ENCODE measurements at regions of chr12 and their contacts with region 1.

Region 1: GRCh38 chr12:102061560-102062418 is at the start of gene WASHC3:
- DNase-seq: peak; percentile 97
- H3K4me3 Mint-ChIP-seq: peak within 1 kb of the TSS; percentile 85
- H3K27ac Mint-ChIP-seq: peak within 1 kb of the TSS; percentile 92
- H3K4me1 Mint-ChIP-seq: peaks cover 32% of the 10 kb centered on the region
- H3K27me3 Mint-ChIP-seq: no peaks in the 10 kb centered on the region
- total RNA-seq, gene WASHC3: 39.3 to 40.1 TPM

Region 2: GRCh38 chr12:101697197-101697929 is 364.4 kb before region 1 on chr12 and contains the start of gene CHPT1:
- CTCF ChIA-PET with region 1: no interaction called
- POLR2A ChIA-PET with region 1: no interaction called
- intact Hi-C with region 1: loop called (anchors 5 kb)
- DNase-seq: peak; percentile 74
- H3K4me3 Mint-ChIP-seq: peak within 1 kb of the TSS; percentile 88
- H3K27ac Mint-ChIP-seq: peak within 1 kb of the TSS; percentile 61
- H3K4me1 Mint-ChIP-seq: peaks cover 39% of the 10 kb centered on the region
- H3K27me3 Mint-ChIP-seq: no peaks in the 10 kb centered on the region
- total RNA-seq, gene CHPT1: 20.6 to 23.0 TPM

Region 3: DNA sequence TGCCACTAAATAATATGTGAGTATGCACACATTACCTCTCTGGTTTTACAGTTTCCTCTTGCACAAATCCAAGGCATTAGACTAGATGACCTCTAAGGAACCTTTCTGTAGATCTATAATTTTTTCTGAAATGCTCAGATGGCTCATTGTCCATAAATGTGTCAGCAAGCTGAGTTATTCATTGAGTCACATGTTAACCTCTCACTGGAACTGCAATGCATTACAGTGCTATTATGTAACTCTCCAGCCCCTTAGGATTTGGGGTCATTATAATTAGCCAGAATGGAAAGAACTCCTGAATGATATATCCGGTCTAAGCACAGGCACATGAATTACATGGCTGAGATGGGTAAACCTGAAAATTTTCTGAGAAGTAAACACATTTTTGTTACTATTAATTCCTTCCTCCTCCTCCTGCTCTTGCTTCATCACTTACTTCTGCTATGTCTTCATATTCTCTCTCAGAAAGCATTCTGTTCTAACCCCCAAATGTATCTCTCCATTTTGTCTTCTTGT is 204.7 kb before region 1 on chr12:
- CTCF ChIA-PET with region 1: no interaction called
- POLR2A ChIA-PET with region 1: no interaction called
- intact Hi-C with region 1: loop called (anchors 5 kb)
- DNase-seq: no peak
- H3K4me3 Mint-ChIP-seq: no peak overlapping the region
- H3K27ac Mint-ChIP-seq: no peak overlapping the region
- H3K4me1 Mint-ChIP-seq: peaks cover 23% of the 10 kb centered on the region
- H3K27me3 Mint-ChIP-seq: no peaks in the 10 kb centered on the region

Region 4: GRCh38 chr12:101951002-101951670 is 110.7 kb before region 1 on chr12:
- CTCF ChIA-PET with region 1: no interaction called
- POLR2A ChIA-PET with region 1: no interaction called
- intact Hi-C with region 1: loop called (anchors 1 kb)
- DNase-seq: peak; percentile 32
- H3K4me3 Mint-ChIP-seq: no peak overlapping the region
- H3K27ac Mint-ChIP-seq: no peak overlapping the region
- H3K4me1 Mint-ChIP-seq: peaks cover 6% of the 10 kb centered on the region
- H3K27me3 Mint-ChIP-seq: peaks cover 3% of the 10 kb centered on the region

Region 5: GRCh38 chr12:102043928-102044327 is 17.9 kb before region 1 on chr12:
- CTCF ChIA-PET with region 1: no interaction called
- POLR2A ChIA-PET with region 1: interaction called, 3 read pairs
- intact Hi-C with region 1: loop called (anchors 1 kb)
- DNase-seq: no peak
- H3K4me3 Mint-ChIP-seq: no peak overlapping the region
- H3K27ac Mint-ChIP-seq: no peak overlapping the region
- H3K4me1 Mint-ChIP-seq: peaks cover 12% of the 10 kb centered on the region
- H3K27me3 Mint-ChIP-seq: no peaks in the 10 kb centered on the region

Region 6: DNA sequence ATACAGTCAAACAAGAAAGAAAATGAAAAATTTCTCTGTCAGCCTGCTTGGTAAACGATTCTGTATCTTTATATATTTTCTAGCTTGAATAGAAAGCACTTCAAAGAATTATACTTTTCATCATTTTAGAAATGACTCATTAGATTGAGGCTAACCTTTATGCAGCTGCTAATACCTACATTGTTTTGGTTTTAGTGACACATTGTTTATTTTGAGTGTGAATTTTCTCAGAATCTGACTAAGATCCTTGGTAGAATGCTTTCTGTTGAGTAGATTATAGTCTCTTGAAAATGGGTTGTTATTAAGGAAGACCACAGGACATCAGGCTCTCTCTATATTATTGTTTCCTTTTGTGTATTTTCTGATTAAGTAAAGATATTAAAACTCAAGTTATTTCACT is 136.0 kb after region 1 on chr12 and contains the start of gene PMCH:
- CTCF ChIA-PET with region 1: no interaction called
- POLR2A ChIA-PET with region 1: no interaction called
- intact Hi-C with region 1: loop called (anchors 5 kb)
- DNase-seq: no peak
- H3K4me3 Mint-ChIP-seq: no peak within 1 kb of the TSS
- H3K27ac Mint-ChIP-seq: no peak within 1 kb of the TSS
- H3K4me1 Mint-ChIP-seq: peaks cover 8% of the 10 kb centered on the region
- H3K27me3 Mint-ChIP-seq: no peaks in the 10 kb centered on the region
- total RNA-seq, gene PMCH: 0.59 TPM in 1 of 2 experiments, not detected in the other

Measured in activated CD4-positive, alpha-beta memory T cell treated with anti-CD3 and anti-CD28 coated beads for 36 hours (primary cell).